Activated CD4-positive, alpha-beta T cell treated with anti-CD3 and anti-CD28 coated beads, Interleukin-2, amount 10 ng/mL, durations not matched to agents 24 days and 14 days (primary cell): ENCODE measurements at regions of chr5 and their contacts with region 1.

Region 1: DNA sequence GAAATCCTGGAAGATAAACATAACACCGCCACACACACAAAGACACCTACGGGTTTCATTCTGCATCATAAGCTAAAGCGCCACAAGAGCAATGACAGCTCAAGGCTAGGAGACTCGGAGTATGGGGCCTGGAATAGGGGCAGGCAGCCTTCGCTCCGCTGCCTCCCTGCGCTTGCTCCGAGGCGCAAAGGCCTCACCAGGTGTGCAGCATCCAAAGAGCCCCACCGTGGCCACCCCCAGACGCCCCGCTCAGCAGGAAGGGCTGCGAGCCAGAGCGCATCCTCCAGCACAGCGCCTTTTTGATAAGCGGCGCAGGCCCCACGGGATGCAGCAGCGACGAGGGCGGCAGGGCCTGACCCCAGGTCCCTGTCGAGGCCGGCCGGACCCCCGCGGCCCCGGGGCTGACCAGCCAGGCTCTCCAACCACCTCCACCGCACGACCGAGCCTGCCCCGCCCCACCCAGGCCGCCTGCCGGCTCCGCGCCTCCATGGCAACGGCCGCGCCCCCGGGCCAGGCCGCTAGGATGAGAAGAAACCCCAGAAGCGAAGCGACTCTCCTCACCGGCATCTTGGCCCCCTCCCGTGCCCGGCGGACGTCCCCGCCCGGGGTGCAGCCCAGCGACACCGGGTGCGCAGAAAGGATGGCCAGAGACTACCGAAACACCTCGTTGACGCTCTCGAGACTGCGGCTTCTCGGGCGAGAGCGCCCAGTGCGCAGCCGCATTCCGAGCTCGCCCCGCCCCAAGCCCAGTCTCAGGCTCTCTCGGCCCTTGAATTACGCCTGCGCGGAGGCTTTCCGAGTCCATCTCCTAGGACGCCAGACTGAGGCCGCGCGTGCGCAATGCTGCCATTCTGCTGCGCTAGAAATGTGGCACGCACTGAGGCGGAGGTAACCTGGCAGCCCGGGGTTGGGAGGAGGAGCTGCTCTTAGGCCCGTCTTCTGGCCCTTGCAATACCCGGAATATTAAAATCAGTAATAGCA is at the start of gene KIF3A:
- DNase-seq: peak; percentile 100
- H3K4me3 Mint-ChIP-seq: peak within 1 kb of the TSS; percentile 91
- H3K27ac Mint-ChIP-seq: peak within 1 kb of the TSS; percentile 92
- H3K4me1 Mint-ChIP-seq: peaks cover 40% of the 10 kb centered on the region
- H3K27me3 Mint-ChIP-seq: peaks cover 17% of the 10 kb centered on the region
- total RNA-seq, gene KIF3A: 44.2 and 51.9 TPM in 2 replicates

Region 2: GRCh38 chr5:131142970-131143617 is 1594.0 kb before region 1 on chr5:
- intact Hi-C with region 1: no loop called
- DNase-seq: no peak
- H3K4me3 Mint-ChIP-seq: no peak overlapping the region
- H3K27ac Mint-ChIP-seq: no peak overlapping the region
- H3K4me1 Mint-ChIP-seq: no peaks in the 10 kb centered on the region
- H3K27me3 Mint-ChIP-seq: peaks cover 9% of the 10 kb centered on the region

Region 3: GRCh38 chr5:132410451-132411381 is 326.4 kb before region 1 on chr5:
- intact Hi-C with region 1: loop called (anchors 10 kb)
- DNase-seq: peak; percentile 98
- H3K4me3 Mint-ChIP-seq: peak overlapping the region; percentile 100
- H3K27ac Mint-ChIP-seq: peak overlapping the region; percentile 99
- H3K4me1 Mint-ChIP-seq: peaks cover 48% of the 10 kb centered on the region
- H3K27me3 Mint-ChIP-seq: no peaks in the 10 kb centered on the region

Region 4: DNA sequence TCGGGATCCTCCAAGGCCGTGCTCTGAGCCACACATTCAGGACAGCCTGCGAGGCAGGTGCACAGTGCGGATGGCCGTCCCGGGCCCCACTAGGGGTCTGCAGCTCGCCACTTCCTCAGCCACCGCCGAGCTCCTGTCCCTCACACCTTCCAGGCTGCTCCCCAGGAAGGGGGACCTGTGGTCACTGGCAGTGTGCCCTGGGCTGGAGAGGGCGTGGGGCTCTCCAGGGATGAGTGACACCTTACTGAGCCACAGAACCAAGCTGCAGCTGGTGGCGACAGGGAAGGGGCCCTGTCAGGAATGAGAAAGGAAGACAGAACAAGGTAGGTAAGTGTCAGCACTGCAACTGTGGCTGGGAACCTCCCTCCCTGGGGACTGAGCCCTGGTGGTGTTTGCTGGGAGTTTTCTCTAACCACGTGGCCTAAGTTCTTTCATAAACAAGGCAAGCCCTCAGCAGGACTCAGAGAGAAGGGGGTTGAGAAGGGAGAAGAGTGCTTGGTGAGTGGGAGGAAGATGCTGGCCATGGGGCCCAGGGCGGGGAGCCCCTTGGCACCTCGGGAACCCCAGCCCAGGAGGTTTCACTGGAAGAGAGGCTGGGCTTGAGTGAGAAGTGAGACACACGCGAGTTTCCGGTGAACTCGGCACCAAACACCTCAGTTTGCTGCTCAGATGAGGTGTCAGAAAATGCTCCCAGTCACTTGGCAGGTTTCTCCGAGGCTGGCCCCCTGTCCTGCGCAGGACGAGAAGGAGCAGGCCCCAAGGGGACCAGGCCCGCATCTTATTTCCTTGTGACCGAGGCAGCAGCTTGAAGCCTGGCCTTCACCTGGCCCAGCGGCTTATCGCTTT is 74.0 kb before region 1 on chr5:
- intact Hi-C with region 1: loop called (anchors 5 kb)
- DNase-seq: peak; percentile 81
- H3K4me3 Mint-ChIP-seq: peak overlapping the region; percentile 67
- H3K27ac Mint-ChIP-seq: peak overlapping the region; percentile 85
- H3K4me1 Mint-ChIP-seq: peaks cover 66% of the 10 kb centered on the region
- H3K27me3 Mint-ChIP-seq: no peaks in the 10 kb centered on the region

Region 5: DNA sequence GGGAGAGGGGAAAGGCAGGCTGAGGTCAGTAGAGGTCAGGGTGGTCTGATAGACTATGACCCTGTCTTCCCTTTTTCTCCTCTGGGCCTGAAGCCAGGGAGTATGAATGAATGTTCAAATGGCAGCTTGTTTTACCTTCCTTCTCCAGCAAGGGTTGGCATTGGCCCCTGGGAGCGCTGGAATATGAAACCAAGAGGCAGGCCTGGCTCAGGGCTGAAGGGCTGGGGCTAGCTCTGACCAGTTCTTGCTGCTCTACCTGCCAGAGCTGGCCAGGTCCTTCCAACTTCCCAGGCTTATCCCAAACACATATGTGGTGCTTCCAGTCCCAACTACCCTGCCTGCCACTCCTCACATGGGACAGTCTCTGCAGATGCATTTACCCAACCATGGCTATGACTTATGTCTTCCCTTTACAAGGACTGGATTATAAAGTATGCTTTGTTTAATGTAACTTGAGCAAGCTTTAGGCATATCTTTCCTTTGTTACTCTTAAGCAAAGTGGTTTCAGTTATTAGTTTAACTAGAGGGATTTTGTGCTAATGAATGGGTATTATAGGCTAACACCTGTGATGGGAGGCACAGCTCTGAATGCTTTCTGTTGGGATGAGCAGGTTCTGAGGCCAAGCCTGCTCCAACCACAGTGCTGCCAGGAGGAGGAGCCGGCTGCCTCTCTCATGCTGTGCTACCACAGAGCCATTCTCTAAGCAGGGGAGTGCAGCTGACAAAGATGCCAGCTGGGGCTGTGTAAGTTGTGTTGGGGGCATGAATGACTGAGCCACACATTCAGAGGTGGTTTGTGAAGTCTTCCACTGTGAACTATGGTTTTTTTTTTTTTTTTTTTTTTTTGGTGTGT is 16.2 kb after region 1 on chr5:
- intact Hi-C with region 1: loop called (anchors 1 kb)
- DNase-seq: peak; percentile 74
- H3K4me3 Mint-ChIP-seq: no peak overlapping the region
- H3K27ac Mint-ChIP-seq: peak overlapping the region; percentile 82
- H3K4me1 Mint-ChIP-seq: peaks cover 57% of the 10 kb centered on the region
- H3K27me3 Mint-ChIP-seq: no peaks in the 10 kb centered on the region

Region 6: GRCh38 chr5:132820162-132820754 is 83.1 kb after region 1 on chr5:
- intact Hi-C with region 1: loop called (anchors 2 kb)
- DNase-seq: peak; percentile 97
- H3K4me3 Mint-ChIP-seq: peak overlapping the region; percentile 37
- H3K27ac Mint-ChIP-seq: no peak overlapping the region
- H3K4me1 Mint-ChIP-seq: peaks cover 15% of the 10 kb centered on the region
- H3K27me3 Mint-ChIP-seq: peaks cover 39% of the 10 kb centered on the region